ENCODE measurements at regions of chr13 and their contacts with region 1.

Region 1: GRCh38 chr13:27533155-27533643 is 82.8 kb upstream of the MTIF3 start:
- DNase-seq: peak; percentile 65
- ATAC-seq: peak; percentile 96
- H3K4me3 ChIP-seq: peak overlapping the region; percentile 16 to 54 (median 20); a peak in 5 of 6 replicates
- H3K27ac ChIP-seq: no peak overlapping the region
- H3K4me1 ChIP-seq: peaks cover 29% of the 10 kb centered on the region
- H3K27me3 ChIP-seq: no peaks in the 10 kb centered on the region
- CTCF ChIP-seq: peak; percentile 98
- EP300 ChIP-seq: 0 out of 4 replicates have a peak, but pooled peaks of 1 of the 2 experiments have one; percentile 30
- POLR2A ChIP-seq: no peak
- RAD21 ChIP-seq: peak; percentile 93

Region 2: GRCh38 chr13:27374650-27375049 is 158.5 kb before region 1 on chr13:
- CTCF ChIA-PET with region 1: interaction called, 6 read pairs
- POLR2A ChIA-PET with region 1: no interaction called
- in situ Hi-C with region 1: no loop called
- intact Hi-C with region 1: loop called (anchors 2 kb)
- DNase-seq: peak; percentile 74
- ATAC-seq: peak; percentile 80
- H3K4me3 ChIP-seq: peak overlapping the region in 1 of 3 experiments; percentile 33; a peak in 1 of 6 replicates
- H3K27ac ChIP-seq: no peak overlapping the region
- H3K4me1 ChIP-seq: peaks cover 42% of the 10 kb centered on the region
- H3K27me3 ChIP-seq: peaks cover 0 to 17% of the 10 kb centered on the region in 2 experiments; a peak in 4 of 5 replicates
- CTCF ChIP-seq: peak; percentile 87
- EP300 ChIP-seq: no peak
- POLR2A ChIP-seq: no peak
- RAD21 ChIP-seq: peak; percentile 73

Region 3: DNA sequence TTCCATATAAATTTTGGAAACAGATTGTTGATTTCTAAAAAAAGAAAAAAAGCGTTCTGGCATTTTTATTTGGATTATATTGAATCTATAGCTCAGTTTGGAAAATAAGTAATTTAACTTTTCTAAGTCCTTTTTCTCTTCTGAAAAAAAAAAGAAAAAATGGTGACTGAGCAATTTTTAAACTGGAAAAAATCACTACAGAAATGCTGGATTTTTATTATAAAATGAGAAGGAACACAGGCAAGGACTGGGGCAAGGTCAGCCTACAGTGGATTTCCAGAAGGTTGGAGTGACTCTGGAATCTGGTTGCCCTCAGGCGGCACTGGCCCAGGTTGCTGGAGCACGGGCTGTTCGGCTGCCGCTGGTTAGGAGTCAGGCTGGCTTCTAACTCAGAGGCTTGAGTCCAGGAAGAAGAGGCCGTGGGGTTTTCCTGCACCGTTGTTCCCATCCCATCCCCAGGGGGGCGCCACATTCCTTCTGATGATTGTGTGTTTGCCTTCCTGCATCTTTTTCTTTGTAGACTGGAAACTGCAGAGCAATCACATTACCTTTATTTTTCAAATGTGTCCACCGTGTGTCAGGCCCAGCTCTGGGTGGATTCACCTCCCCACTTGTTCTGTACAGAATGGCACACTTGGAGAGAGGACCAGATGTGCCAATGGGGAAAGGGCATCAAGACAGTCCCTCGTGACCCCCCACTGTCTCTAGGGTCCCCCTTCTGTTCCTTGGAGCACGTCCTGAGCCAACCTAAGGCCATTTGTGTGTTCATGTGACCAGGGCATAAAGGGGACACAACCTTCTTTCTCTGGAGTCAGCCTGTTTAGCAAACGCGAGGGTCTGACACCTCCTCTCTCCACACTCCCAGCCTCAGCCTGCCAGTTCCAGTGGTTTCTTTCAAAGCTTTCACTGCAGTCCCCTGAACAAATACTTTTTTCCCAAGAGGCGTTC is 153.2 kb before region 1 on chr13:
- CTCF ChIA-PET with region 1: interaction called, 6 read pairs
- POLR2A ChIA-PET with region 1: no interaction called
- in situ Hi-C with region 1: no loop called
- intact Hi-C with region 1: loop called (anchors 2 kb)
- DNase-seq: peak; percentile 60
- ATAC-seq: peak; percentile 69
- H3K4me3 ChIP-seq: peak overlapping the region in 2 of 3 experiments; percentile 45; a peak in 4 of 6 replicates
- H3K27ac ChIP-seq: no peak overlapping the region
- H3K4me1 ChIP-seq: peaks cover 68% of the 10 kb centered on the region
- H3K27me3 ChIP-seq: no peaks in the 10 kb centered on the region
- CTCF ChIP-seq: peak; percentile 89
- EP300 ChIP-seq: no peak
- POLR2A ChIP-seq: no peak
- RAD21 ChIP-seq: peak; percentile 78

Region 4: GRCh38 chr13:27516103-27516502 is 17.1 kb before region 1 on chr13:
- CTCF ChIA-PET with region 1: no interaction called
- POLR2A ChIA-PET with region 1: no interaction called
- in situ Hi-C with region 1: no loop called
- intact Hi-C with region 1: no loop called
- DNase-seq: no peak
- ATAC-seq: no peak
- H3K4me3 ChIP-seq: no peak overlapping the region
- H3K27ac ChIP-seq: no peak overlapping the region
- H3K4me1 ChIP-seq: no peaks in the 10 kb centered on the region
- H3K27me3 ChIP-seq: no peaks in the 10 kb centered on the region
- CTCF ChIP-seq: no peak
- EP300 ChIP-seq: no peak
- POLR2A ChIP-seq: no peak
- RAD21 ChIP-seq: no peak

Region 5: GRCh38 chr13:27620377-27621115 is 87.3 kb after region 1 on chr13 and contains the start of gene LNX2:
- CTCF ChIA-PET with region 1: no interaction called
- POLR2A ChIA-PET with region 1: interaction called, 3 read pairs
- in situ Hi-C with region 1: no loop called
- intact Hi-C with region 1: loop called (anchors 5 kb)
- DNase-seq: peak; percentile 91
- ATAC-seq: peak; percentile 94
- H3K4me3 ChIP-seq: peak within 1 kb of the TSS; percentile 79 to 95 (median 91)
- H3K27ac ChIP-seq: peak within 1 kb of the TSS; percentile 91
- H3K4me1 ChIP-seq: peaks cover 62% of the 10 kb centered on the region
- H3K27me3 ChIP-seq: no peaks in the 10 kb centered on the region; a peak in 1 of 5 replicates
- CTCF ChIP-seq: peak; percentile 10; the same call in 1 of the 2 replicates
- EP300 ChIP-seq: no peak
- POLR2A ChIP-seq: peak in 1 of 2 experiments; percentile 64; a peak in 3 of 4 replicates
- RAD21 ChIP-seq: 0 out of 2 replicates have a peak, but pooled peaks have one; percentile 64
- total RNA-seq, gene LNX2: 9.7 and 13.1 TPM in 2 replicates

Region 6: DNA sequence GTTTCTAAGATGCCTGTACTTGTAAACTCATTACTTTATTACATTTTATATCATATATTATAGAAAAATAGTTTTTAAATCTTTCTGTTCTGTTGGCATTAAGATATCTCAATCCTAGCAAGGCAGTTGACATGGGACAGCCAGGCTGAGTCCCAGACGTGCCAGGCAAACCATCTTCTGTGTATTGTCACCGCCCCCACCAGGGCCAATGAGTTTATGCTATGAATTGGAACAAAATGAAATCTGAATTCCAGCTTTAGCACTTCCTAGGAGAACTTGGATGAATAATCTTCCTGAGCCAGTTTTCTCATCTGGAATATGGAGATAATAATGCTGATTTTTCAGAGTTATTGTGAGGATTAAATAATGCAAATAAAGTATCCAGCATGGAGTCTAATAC is 179.2 kb after region 1 on chr13:
- CTCF ChIA-PET with region 1: interaction called, 16 read pairs
- POLR2A ChIA-PET with region 1: no interaction called
- in situ Hi-C with region 1: loop called (anchors 5 kb)
- intact Hi-C with region 1: loop called (anchors 1 kb)
- DNase-seq: peak; percentile 36
- ATAC-seq: peak; percentile 84
- H3K4me3 ChIP-seq: no peak overlapping the region
- H3K27ac ChIP-seq: no peak overlapping the region
- H3K4me1 ChIP-seq: peaks cover 16% of the 10 kb centered on the region; the same call in 1 of the 2 replicates
- H3K27me3 ChIP-seq: peaks cover 0 to 1% of the 10 kb centered on the region in 2 experiments; a peak in 2 of 5 replicates
- CTCF ChIP-seq: peak; percentile 69
- EP300 ChIP-seq: no peak
- POLR2A ChIP-seq: no peak
- RAD21 ChIP-seq: peak; percentile 51

Region 7: GRCh38 chr13:27792393-27793218 is 259.4 kb after region 1 on chr13 and contains the start of gene GSX1:
- CTCF ChIA-PET with region 1: no interaction called
- POLR2A ChIA-PET with region 1: no interaction called
- in situ Hi-C with region 1: no loop called
- intact Hi-C with region 1: no loop called
- DNase-seq: peak; percentile 18
- ATAC-seq: peak; percentile 75
- H3K4me3 ChIP-seq: peak within 1 kb of the TSS; percentile 9 to 51 (median 38); a peak in 3 of 6 replicates
- H3K27ac ChIP-seq: no peak within 1 kb of the TSS
- H3K4me1 ChIP-seq: peaks cover 27% of the 10 kb centered on the region
- H3K27me3 ChIP-seq: peaks cover 9 to 72% of the 10 kb centered on the region in 2 experiments
- CTCF ChIP-seq: no peak
- EP300 ChIP-seq: no peak
- POLR2A ChIP-seq: no peak
- RAD21 ChIP-seq: no peak
- total RNA-seq, gene GSX1: not detected in 2 replicates

Region 8: DNA sequence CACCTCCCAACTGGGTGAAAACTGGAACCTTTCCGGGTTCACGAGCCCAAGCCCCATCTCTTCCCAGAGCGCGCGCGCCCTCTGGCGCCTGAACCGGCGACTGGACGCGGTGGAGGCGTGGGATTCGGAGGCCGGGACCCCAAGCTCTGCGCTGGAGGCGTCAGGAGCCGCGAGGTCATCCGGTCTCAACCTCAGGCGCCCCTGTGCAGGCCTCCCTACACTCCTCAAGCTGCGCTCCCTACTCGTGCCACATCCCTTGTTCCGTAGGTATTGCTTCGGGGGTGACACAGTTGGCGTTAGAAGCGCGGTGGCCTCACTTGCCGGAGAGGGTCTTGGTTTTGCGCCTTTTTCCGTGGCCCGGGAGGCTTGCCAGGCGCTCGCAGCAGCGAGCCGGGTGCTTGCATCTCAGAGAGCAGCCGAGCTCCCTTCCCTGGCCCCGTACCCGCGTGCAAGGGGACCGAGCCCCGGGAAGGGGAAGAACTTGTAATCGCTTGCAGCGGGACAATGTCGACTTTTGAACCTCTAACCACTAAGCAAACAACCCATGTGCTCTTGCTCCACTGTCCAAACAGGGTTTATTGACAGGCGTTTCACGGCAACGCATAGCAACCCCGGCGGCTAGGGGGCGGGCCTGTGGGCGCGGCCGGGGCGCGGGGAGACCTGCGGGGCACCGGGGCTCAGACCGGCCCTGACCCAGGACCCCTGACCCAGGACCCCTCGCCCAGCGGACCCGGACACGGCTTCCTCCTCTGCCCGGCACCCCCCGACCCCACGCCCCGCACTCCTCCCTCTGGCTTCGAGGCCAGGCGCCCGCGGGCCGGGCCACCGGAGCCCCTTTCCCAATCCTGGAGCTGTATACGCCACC is 427.4 kb after region 1 on chr13:
- CTCF ChIA-PET with region 1: no interaction called
- POLR2A ChIA-PET with region 1: no interaction called
- in situ Hi-C with region 1: no loop called
- intact Hi-C with region 1: loop called (anchors 1 kb)
- DNase-seq: peak; percentile 97
- ATAC-seq: peak; percentile 90
- H3K4me3 ChIP-seq: peak overlapping the region; percentile 55 to 77 (median 77)
- H3K27ac ChIP-seq: peak overlapping the region; percentile 98
- H3K4me1 ChIP-seq: peaks cover 61% of the 10 kb centered on the region
- H3K27me3 ChIP-seq: peaks cover 3 to 10% of the 10 kb centered on the region in 2 experiments; a peak in 2 of 5 replicates
- CTCF ChIP-seq: peak; percentile 90
- EP300 ChIP-seq: peak; percentile 87 to 94
- POLR2A ChIP-seq: peak in 1 of 2 experiments; percentile 94; a peak in 2 of 4 replicates
- RAD21 ChIP-seq: peak; percentile 81

Region 9: DNA sequence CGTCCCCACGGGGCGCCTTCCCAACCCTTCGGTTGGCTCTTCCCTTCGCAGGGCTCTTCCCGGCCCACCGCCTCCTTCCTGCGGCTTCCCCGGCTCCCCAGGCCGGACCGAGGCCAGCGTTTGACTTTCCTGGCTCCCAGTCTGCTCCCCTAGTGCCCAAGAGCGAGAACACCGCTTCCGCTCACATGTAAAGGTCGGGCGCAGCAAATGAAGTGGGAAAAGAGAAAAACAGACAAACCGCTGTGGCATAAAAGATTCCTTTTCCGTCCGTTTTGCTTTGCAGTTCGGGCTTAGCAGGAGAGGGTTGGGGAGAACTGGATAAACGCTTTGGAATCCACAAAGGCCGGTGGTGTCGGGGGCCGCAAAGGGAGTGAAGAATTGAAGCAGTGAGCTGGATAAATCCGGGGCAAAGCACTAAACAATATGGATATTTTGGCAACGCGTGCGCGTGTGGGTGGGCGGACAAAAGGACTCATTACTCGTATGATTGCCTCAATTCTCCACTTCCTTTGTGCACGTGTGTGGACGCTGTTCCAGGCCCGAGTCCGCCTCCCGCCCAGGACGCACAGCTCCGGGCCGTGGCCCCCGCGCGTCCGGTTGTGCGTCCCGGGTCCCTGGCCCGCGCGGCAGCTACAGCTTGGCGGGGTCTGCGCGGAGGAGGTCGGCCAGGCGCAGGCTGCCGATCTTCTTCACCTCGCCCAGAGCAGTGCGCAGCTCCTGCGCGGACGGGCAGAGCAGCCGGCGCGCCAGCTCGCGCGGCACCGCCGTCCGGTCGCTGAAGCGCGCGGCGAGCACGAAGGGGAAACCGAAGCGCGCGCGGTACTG is 444.5 kb after region 1 on chr13:
- CTCF ChIA-PET with region 1: no interaction called
- POLR2A ChIA-PET with region 1: no interaction called
- in situ Hi-C with region 1: no loop called
- intact Hi-C with region 1: loop called (anchors 5 kb)
- DNase-seq: no peak
- ATAC-seq: peak; percentile 24; the same call in 2 of the 3 replicates
- H3K4me3 ChIP-seq: no peak overlapping the region
- H3K27ac ChIP-seq: no peak overlapping the region
- H3K4me1 ChIP-seq: peaks cover 13% of the 10 kb centered on the region
- H3K27me3 ChIP-seq: peaks cover 10 to 68% of the 10 kb centered on the region in 2 experiments
- CTCF ChIP-seq: no peak
- EP300 ChIP-seq: no peak
- POLR2A ChIP-seq: no peak
- RAD21 ChIP-seq: no peak